ENCODE measurements at regions of chr11 and their contacts with region 1.

Region 1: DNA sequence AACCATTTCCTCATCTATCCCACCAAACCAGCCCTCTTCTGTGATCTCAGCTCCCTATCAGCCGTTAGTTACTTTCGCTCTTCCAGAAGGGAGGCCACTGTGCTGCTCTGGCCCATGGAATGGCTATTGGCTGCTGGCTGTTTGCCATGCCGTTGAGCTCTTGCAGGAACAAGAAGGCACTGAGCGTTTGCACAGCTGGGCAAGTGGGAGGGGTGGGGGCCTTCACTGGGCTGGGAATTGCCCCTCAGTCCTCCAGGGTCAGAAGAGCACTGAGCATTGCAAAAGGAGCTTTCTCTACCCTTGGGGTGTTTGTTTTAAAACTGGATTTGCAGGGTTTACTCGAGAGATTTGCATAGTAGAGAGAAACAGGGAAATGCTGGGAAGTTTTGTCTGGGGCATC is 129.0 kb upstream of the PARVA start:
- DNase-seq: peak; percentile 72 to 81
- ATAC-seq: peak; percentile 52 to 78 (median 69)
- H3K4me3 ChIP-seq: no peak overlapping the region
- H3K27ac ChIP-seq: peak overlapping the region in 8 of 10 donors; percentile 9 to 71 (median 57)
- H3K4me1 ChIP-seq: peaks cover 7 to 70% (median 49%) of the 10 kb centered on the region in 9 donors
- H3K27me3 ChIP-seq: no peaks in the 10 kb centered on the region
- CTCF ChIP-seq: no peak

Region 2: DNA sequence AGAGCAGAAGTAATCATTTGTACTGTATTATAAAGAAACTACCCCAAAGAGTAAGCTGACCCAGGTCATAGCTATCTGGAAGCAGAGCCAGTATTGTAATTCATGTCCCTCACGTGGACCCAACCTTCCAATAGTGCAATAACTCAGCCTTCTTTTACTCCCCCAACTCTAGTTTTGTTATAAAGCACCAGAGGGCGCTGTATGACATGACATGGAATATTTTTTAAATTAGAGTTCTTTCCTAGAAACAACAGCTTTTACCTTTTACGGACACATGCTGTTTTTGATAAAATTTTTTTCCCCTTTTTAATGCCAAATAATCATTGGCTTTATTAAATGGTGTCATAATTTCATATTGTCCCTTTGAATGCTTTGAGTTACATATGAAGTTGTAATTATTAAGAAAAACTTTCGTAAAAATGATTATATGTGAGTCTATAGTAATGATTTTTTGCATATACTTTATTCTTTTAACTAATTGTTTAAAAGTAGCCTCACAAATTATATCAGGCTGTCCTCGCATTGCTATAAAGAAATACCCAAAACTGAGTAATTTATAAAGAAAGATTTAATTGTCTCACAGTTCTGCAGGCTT is 316.8 kb before region 1 on chr11:
- intact Hi-C with region 1: loop called in 1 of 10 experiments (anchors 10 kb)
- DNase-seq: peak in 1 of 2 donors; percentile 27
- ATAC-seq: peak in 6 of 8 donors; percentile 55 to 73 (median 63)
- H3K4me3 ChIP-seq: no peak overlapping the region
- H3K27ac ChIP-seq: no peak overlapping the region
- H3K4me1 ChIP-seq: peaks cover 0 to 6% (median 0%) of the 10 kb centered on the region in 9 donors
- H3K27me3 ChIP-seq: no peaks in the 10 kb centered on the region
- CTCF ChIP-seq: peak; percentile 40 to 79 (median 73)

Region 3: DNA sequence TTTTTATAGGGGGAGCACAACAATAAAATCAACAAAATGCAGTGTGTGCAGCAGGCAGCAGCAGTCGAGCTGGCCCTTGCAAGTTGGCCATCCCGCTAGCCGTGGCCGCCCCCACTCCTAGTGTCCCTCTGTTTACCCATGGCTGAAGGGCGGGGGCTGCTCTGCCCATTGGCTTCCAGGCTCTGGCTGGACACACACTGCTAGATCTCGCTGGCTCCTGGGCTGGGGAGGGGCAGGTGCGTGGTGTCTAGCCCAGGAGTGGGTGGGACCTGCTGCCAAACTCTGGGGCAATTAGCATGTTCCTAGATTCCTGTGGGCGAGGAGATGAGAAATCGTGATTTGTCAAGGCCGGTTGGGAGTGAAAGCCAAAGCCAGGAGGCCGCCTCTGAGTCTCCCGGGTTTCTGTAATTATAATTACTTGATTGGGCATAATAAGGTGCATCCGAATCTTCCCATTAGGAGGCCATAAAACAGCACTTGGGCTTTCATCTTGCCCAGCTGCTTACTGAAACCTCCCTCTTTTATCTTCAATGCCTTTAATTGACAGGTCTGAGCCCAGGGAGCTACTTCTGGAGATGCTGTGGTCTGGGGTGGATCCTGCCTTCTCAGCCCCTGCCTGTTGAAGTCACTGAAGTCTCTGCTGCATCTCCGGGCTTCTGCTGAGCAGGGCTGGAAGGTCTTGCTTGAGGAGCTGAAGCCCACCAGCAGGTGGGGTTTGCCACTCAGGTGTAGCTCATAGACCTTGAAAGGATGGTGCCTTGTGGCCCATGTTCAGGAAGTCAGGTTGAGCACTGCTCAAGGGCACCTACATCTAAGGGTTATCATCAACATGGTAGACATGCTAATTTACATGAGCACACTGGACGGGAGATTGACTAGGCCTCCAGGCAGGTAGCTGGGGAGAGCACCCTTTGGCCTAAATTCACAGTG is 195.4 kb before region 1 on chr11:
- intact Hi-C with region 1: loop called in 2 of 10 experiments (anchors 5 to 10 kb)
- DNase-seq: no peak
- ATAC-seq: no peak
- H3K4me3 ChIP-seq: no peak overlapping the region
- H3K27ac ChIP-seq: peak overlapping the region in 2 of 10 donors; percentile 27 to 60
- H3K4me1 ChIP-seq: peaks cover 0 to 32% (median 15%) of the 10 kb centered on the region in 9 donors
- H3K27me3 ChIP-seq: no peaks in the 10 kb centered on the region
- CTCF ChIP-seq: no peak

Region 4: DNA sequence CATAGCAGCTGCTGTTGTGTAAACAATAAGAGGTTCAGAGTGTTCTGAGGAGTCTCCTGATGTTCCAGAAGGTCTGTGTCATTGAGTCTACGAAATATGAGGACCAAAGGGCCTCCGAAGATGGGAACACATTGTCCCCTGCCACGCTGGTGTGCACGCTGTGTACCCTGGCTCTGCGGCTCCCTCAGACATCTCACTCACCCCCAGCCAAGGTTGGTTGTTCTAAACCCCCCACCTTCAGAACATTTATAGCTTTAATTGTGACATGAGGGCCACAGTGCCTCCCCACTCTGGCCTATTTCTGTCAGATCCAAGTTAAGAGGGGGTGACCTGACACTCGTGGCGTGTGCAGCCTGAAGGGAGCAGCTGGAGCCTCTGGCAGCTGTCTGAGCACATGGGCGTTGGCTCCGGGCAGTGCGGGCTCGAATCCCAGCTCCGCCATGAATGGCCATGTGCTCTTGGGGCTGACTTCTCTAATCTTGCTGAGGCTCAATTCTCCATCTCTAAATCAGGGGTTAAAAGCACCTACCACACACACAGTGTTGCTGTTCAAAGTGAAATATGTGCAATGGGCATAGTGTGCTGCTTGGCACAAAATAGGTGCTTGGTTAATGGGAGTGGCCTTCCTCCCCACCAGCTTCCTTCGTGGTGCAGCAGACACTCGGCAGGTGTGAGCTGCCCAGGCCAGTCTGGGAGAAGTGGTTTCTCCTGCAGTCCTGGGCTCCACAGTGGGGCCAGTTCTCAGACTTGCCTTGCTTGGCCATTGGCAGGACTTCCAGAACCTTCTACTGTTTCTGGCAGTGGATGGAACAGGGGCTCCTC is 177.7 kb before region 1 on chr11:
- intact Hi-C with region 1: loop called in 1 of 10 experiments (anchors 5 kb)
- DNase-seq: no peak
- ATAC-seq: peak in 3 of 8 donors; percentile 28 to 77 (median 49)
- H3K4me3 ChIP-seq: no peak overlapping the region
- H3K27ac ChIP-seq: no peak overlapping the region
- H3K4me1 ChIP-seq: peaks cover 0 to 16% (median 10%) of the 10 kb centered on the region in 9 donors
- H3K27me3 ChIP-seq: no peaks in the 10 kb centered on the region
- CTCF ChIP-seq: no peak

Region 5: DNA sequence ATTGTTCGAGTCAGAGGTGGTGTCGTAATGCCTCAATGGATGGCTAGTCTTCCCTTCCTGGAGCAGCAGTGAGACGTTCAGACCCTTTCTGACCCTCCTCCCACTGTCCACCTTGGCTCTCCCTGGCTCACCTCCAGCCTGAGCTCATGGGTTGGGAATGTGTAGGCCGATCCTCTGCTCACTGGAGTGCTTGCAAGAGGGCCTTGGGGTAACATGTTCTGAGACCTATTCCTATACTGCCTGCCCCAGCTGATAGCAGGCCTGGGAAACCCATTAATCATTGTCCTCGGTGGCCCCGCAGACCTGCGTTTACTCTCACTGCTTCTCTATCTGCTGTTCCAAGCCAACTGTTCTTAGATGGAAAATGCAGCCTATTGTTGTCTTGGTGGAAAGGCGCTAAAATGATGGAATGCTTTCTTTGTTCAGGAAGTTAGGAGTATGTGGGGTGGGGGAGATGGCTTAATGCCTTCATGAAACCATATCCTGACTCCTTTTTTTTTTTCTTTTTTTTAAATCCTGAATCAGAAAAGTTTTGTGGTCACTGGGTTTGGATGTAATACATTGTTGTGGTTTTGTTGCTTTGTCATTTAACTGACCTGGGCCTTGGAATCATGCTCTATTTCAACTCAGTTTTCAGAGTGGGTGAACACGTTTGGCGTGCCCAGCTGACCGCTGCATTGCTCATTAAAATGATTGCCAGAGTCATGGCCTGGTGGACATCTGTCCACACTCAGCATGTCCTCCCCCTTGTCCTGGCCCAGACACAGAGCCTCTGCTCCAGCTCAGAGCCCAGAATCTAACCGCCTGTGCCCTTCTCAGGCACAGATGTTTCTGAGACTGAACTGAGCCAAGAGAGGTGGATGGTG is 65.4 kb before region 1 on chr11:
- intact Hi-C with region 1: no loop called
- DNase-seq: peak in 1 of 2 donors; percentile 74
- ATAC-seq: peak; percentile 66 to 87 (median 78)
- H3K4me3 ChIP-seq: no peak overlapping the region
- H3K27ac ChIP-seq: peak overlapping the region in 9 of 10 donors; percentile 66 to 88 (median 78)
- H3K4me1 ChIP-seq: peaks cover 21 to 96% (median 73%) of the 10 kb centered on the region in 9 donors
- H3K27me3 ChIP-seq: no peaks in the 10 kb centered on the region
- CTCF ChIP-seq: no peak

Measured in heart right ventricle (tissue), 16 donors.